ENCODE measurements at regions of chr3 and their contacts with region 1.

Region 1: GRCh38 chr3:183555541-183556081 is at the start of gene KLHL6:
- DNase-seq: peak; percentile 53 to 73 (median 54)
- ATAC-seq: peak; percentile 88
- H3K4me3 ChIP-seq: no peak within 1 kb of the TSS
- H3K4me1 ChIP-seq: no peaks in the 10 kb centered on the region
- CTCF ChIP-seq: no peak
- total RNA-seq, gene KLHL6: 1.9 to 3.0 (median 1.9) TPM

Region 2: DNA sequence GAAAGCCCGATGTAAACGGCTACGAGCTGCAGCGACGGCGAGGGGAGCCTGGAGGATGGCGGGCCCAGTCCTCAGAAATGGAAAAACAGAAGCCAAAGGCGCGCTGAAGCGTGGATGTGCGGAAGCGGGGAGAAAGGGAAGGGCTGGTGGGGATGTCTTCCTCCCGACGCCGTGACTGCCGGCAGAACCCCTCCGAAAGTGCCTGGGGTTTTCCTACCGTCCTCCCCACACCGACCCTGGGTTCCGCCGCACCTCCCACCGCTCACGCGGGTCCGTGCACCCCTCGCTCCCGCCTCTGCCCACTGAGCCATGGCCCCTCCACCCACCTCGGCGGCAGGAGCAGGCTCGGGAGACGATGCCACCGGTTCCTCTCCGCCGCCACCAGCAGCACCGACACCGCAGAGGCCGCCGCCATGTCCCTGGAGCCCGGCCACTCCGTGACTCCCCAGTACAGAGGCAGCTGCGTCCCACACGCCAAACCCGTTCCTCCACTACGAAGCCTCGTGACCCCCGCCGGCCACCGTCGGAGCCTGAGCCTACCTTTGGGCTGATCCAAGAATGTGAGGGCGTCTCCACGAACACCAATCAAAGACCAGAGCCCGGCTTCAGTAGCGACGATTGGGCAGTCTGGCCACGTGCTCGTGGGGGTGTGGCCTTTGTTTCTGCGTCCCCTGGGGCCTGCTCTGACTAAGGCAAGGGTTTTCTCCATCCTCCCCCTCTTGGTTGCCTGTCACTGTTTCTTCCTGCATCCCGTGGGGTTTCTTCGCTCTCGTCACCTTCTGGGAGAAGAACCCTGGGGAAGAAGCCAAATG is 456.4 kb before region 1 on chr3 and contains the start of gene MCCC1:
- intact Hi-C with region 1: no loop called
- DNase-seq: peak; percentile 98 to 99 (median 98)
- ATAC-seq: peak; percentile 100
- H3K4me3 ChIP-seq: peak within 1 kb of the TSS; percentile 83
- H3K4me1 ChIP-seq: peaks cover 4% of the 10 kb centered on the region
- CTCF ChIP-seq: no peak
- total RNA-seq, gene MCCC1: 28.1 to 36.5 (median 32.8) TPM

Region 3: DNA sequence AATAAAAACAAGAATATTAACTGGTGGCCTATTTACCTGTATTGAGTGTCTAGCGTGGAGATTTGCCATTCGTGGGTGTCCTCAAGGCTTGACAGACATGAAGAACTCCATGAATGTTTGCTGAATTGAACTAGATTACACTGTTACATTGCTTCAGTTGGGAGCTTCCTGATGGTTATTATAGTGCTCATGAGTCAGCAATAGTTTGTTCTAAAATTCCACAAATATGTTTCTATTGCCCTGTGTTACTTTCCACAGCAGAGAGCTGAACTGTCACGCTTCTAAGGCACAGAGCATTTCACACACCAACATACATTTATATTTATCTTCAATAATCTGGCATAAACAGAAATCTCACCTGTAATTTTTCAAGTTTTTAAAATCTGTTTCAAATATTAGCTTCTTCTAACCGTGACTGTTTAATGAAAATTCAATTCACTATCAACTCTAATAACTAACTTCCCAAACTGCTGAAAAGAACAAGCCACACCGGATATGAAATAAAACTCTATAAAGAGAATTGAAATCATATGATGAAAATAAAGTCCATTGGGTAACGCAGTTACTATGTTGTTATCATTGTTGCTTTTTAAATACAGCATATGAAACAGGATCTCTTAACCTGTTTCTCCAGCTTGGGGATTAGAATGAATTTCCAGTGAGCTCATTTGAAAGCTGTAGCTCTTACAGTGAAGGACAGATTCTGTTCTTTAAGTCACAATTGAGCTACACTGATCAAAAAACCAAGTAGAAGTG is 66.0 kb before region 1 on chr3:
- intact Hi-C with region 1: loop called in 1 of 2 experiments (anchors 10 kb)
- DNase-seq: no peak
- ATAC-seq: peak; percentile 32
- H3K4me3 ChIP-seq: no peak overlapping the region
- H3K4me1 ChIP-seq: peaks cover 7% of the 10 kb centered on the region
- CTCF ChIP-seq: no peak